ENCODE measurements at regions of chr20 and their contacts with region 1.

Region 1: GRCh38 chr20:62782149-62782892 is 14.0 kb upstream of the MRGBP start:
- DNase-seq: no peak
- ATAC-seq: no peak
- H3K4me3 ChIP-seq: no peak overlapping the region
- H3K27ac ChIP-seq: no peak overlapping the region
- H3K4me1 ChIP-seq: no peaks in the 10 kb centered on the region
- H3K27me3 ChIP-seq: no peaks in the 10 kb centered on the region
- CTCF ChIP-seq: no peak

Region 2: DNA sequence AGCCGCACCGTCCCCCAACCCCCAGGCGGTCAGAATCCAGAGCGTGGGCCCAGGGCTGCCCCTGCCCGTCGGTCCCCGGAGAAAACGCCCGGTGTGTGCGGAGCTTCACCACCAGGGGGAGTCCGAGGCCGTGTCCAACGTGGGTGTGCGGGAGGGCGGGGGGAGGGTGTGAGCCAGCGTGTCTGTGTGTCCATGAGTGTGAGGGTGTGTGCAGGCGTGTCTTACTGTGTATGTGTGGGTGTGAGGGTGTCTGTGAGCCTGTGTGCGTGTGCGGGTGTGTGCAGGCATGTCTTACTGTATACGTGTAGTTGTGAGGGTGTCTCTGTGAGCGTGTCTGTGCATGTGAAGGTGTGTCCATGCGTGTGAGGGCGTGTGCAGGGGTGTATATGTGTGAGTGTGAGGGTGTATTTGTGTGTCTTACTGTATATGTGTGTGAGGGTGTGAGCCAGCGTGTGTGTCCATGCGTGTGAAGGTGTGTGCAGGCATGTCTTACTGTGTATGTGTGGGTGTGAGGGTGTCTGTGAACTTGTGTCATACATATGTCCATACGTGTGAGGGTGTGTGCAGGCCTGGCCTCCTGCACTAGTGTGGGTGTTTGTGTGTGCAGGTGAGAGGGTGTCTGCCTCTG is 282.0 kb before region 1 on chr20:
- intact Hi-C with region 1: loop called in 1 of 3 experiments (anchors 10 kb)
- DNase-seq: peak; percentile 58 to 93 (median 81)
- ATAC-seq: peak; percentile 64 to 83 (median 80)
- H3K4me3 ChIP-seq: no peak overlapping the region
- H3K27ac ChIP-seq: no peak overlapping the region
- H3K4me1 ChIP-seq: peaks cover 7 to 10% (median 8%) of the 10 kb centered on the region in 3 donors
- H3K27me3 ChIP-seq: no peaks in the 10 kb centered on the region
- CTCF ChIP-seq: peak; percentile 67 to 86 (median 72)

Region 3: DNA sequence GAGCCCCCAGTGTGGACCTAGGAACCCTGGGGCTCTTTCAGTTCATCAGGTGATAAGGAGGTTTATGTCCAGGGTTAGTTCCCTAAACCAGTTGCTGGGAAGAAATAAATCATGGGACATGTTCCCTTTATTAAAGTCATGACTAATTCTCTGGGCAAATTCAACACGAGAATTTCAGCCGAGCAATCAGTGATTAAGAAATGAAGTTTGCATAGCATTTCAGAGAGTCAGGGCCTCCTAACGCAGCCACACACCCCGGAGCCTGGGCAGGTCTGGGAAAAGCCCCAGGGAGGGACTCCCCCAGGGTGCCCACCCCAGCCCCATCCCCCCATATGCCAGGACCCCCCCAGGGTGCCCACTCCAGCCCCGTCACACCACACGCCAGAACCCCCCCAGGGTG is 119.9 kb before region 1 on chr20:
- intact Hi-C with region 1: loop called in 1 of 3 experiments (anchors 5 kb)
- DNase-seq: no peak
- ATAC-seq: peak in 1 of 4 donors; percentile 3
- H3K4me3 ChIP-seq: no peak overlapping the region
- H3K27ac ChIP-seq: no peak overlapping the region
- H3K4me1 ChIP-seq: no peaks in the 10 kb centered on the region
- H3K27me3 ChIP-seq: no peaks in the 10 kb centered on the region
- CTCF ChIP-seq: no peak

Region 4: DNA sequence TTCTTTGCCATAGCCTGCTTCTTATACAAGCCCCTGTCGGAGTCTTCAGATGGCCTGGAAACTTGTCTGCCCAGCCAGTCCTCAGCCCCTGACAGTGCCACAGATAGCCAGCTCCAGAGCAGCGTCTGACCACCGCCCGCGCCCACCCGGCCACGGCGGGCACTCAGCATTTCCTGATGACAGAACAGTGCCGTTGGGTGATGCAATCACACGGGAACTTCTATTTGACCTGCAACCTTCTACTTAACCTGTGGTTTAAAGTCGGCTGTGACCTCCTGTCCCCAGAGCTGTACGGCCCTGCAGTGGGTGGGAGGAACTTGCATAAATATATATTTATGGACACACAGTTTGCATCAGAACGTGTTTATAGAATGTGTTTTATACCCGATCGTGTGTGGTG is 110.6 kb before region 1 on chr20:
- intact Hi-C with region 1: loop called in 1 of 3 experiments (anchors 5 kb)
- DNase-seq: peak in 1 of 6 donors; percentile 27
- ATAC-seq: no peak
- H3K4me3 ChIP-seq: no peak overlapping the region
- H3K27ac ChIP-seq: no peak overlapping the region
- H3K4me1 ChIP-seq: no peaks in the 10 kb centered on the region
- H3K27me3 ChIP-seq: no peaks in the 10 kb centered on the region
- CTCF ChIP-seq: no peak

Region 5: GRCh38 chr20:62685781-62686555 is 96.4 kb before region 1 on chr20:
- intact Hi-C with region 1: loop called in 1 of 3 experiments (anchors 10 kb)
- DNase-seq: peak in 2 of 6 donors; percentile 31 to 34
- ATAC-seq: peak in 3 of 4 donors; percentile 49 to 80 (median 65)
- H3K4me3 ChIP-seq: no peak overlapping the region
- H3K27ac ChIP-seq: no peak overlapping the region
- H3K4me1 ChIP-seq: no peaks in the 10 kb centered on the region
- H3K27me3 ChIP-seq: no peaks in the 10 kb centered on the region
- CTCF ChIP-seq: no peak

Region 6: DNA sequence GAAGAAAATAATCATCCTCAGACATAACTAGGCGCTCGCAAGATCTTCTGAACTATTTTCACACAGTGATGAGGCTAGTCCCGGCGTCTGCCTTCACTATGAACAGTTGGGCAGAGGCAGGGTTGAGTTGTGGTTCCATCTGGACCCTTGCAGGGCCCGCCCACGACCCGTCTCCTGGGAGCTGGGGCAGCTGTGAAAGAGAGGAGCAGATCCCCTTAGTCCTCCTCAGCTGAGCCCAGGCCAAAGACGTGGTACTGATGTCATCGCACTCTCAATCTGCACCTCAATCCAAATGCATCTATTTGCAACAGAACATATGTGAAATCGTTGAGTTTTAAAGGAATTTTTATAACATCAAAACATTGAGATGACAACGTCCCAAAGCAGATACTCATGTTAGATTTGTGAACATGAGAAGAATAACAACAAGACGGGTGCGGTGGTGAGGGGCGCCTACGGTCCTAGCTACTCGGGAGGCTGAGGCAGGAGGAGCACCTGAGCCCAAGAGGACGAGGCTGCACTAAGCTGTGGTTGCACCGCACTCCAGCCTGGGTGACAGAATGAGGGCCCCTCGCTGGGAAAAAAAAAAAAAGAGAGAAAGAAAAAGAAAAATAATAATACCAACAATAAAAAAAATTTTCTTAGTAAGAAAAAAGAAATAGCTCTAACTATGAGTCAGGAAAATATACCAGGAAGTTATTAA is 64.0 kb after region 1 on chr20:
- intact Hi-C with region 1: no loop called
- DNase-seq: peak in 1 of 6 donors; percentile 43
- ATAC-seq: no peak
- H3K4me3 ChIP-seq: no peak overlapping the region
- H3K27ac ChIP-seq: no peak overlapping the region
- H3K4me1 ChIP-seq: no peaks in the 10 kb centered on the region
- H3K27me3 ChIP-seq: no peaks in the 10 kb centered on the region
- CTCF ChIP-seq: no peak

Measured in pancreas (tissue), 10 donors.